Calu3 (cell line): ENCODE measurements at regions of chr11 and their contacts with region 1.

Region 1: GRCh38 chr11:75204685-75205563 is 35.6 kb upstream of the TPBGL start:
- DNase-seq: peak; percentile 92
- H3K4me3 Mint-ChIP-seq: no peak overlapping the region
- H3K27ac Mint-ChIP-seq: no peak overlapping the region
- H3K4me1 Mint-ChIP-seq: no peaks in the 10 kb centered on the region
- H3K27me3 Mint-ChIP-seq: peaks cover 31% of the 10 kb centered on the region
- CTCF ChIP-seq: peak; percentile 88

Region 2: GRCh38 chr11:73597956-73598718 is 1606.8 kb before region 1 on chr11 and contains the start of gene FAM168A:
- CTCF ChIA-PET with region 1: interaction called, 10 read pairs
- intact Hi-C with region 1: no loop called
- DNase-seq: peak; percentile 92
- H3K4me3 Mint-ChIP-seq: peak within 1 kb of the TSS; percentile 93
- H3K27ac Mint-ChIP-seq: peak within 1 kb of the TSS; percentile 83
- H3K4me1 Mint-ChIP-seq: peaks cover 22% of the 10 kb centered on the region
- H3K27me3 Mint-ChIP-seq: no peaks in the 10 kb centered on the region
- CTCF ChIP-seq: no peak
- total RNA-seq, gene FAM168A: 30.4 and 30.8 TPM in 2 replicates

Region 3: GRCh38 chr11:74366576-74366975 is 838.3 kb before region 1 on chr11:
- CTCF ChIA-PET with region 1: no interaction called
- intact Hi-C with region 1: no loop called
- DNase-seq: no peak
- H3K4me3 Mint-ChIP-seq: no peak overlapping the region
- H3K27ac Mint-ChIP-seq: no peak overlapping the region
- H3K4me1 Mint-ChIP-seq: no peaks in the 10 kb centered on the region
- H3K27me3 Mint-ChIP-seq: no peaks in the 10 kb centered on the region
- CTCF ChIP-seq: no peak

Region 4: GRCh38 chr11:74929431-74930363 is 275.2 kb before region 1 on chr11:
- CTCF ChIA-PET with region 1: interaction called, 10 read pairs
- intact Hi-C with region 1: loop called (anchors 2 kb)
- DNase-seq: peak; percentile 68
- H3K4me3 Mint-ChIP-seq: no peak overlapping the region
- H3K27ac Mint-ChIP-seq: no peak overlapping the region
- H3K4me1 Mint-ChIP-seq: no peaks in the 10 kb centered on the region
- H3K27me3 Mint-ChIP-seq: no peaks in the 10 kb centered on the region
- CTCF ChIP-seq: peak; percentile 63

Region 5: DNA sequence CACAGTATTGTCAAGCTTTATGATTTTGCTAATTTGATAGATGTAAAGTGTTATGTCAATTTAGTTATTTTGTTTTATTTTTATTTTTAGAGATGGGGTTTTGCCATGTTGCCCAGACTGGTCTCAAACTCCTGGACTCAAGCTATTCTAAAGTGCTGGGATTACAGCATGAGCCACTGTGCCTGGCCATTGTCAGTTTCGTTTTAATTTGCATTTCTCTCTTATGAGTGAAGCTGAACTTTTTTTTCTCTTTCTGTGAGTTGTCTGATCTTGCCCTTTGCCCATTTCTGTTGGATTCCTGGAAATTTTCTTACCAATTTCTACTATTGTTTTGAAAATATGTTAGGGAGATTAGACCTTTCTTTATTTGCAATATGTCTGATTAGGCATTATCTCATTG is 200.7 kb before region 1 on chr11:
- CTCF ChIA-PET with region 1: no interaction called
- intact Hi-C with region 1: no loop called
- DNase-seq: no peak
- H3K4me3 Mint-ChIP-seq: no peak overlapping the region
- H3K27ac Mint-ChIP-seq: no peak overlapping the region
- H3K4me1 Mint-ChIP-seq: no peaks in the 10 kb centered on the region
- H3K27me3 Mint-ChIP-seq: no peaks in the 10 kb centered on the region
- CTCF ChIP-seq: no peak

Region 6: DNA sequence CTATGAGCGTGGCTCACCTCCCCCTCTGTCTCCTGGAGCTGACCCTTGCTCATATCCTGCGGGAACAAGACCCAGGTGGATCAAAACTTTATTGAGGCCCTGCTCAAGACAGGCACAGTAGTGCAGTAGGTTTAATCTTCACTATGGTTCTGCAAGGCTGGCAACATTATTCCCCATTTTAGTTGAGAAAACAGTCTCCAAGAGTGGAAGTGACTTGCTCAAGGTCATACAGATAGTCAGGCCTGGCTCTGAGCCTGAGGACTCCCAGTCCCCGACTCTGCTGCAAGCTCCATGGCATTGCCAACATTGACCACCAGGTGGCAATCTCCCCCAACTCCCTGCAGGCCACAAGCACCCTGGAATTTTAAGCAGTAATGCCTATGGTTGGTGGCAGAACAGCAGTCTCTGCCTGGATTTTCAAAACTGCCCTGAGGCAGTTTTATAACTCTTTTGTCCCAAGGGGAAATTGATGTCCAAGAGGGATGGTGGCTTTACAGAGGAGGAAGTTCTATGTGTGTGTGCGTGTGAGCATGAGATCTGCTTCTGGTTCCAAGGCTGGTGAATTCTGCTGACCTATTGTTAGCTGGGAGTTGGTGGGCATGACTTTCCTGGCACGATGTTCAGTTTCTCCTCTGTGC is 182.0 kb before region 1 on chr11:
- CTCF ChIA-PET with region 1: interaction called, 89 read pairs
- intact Hi-C with region 1: loop called (anchors 1 kb)
- DNase-seq: peak; percentile 88
- H3K4me3 Mint-ChIP-seq: no peak overlapping the region
- H3K27ac Mint-ChIP-seq: no peak overlapping the region
- H3K4me1 Mint-ChIP-seq: peaks cover 8% of the 10 kb centered on the region
- H3K27me3 Mint-ChIP-seq: no peaks in the 10 kb centered on the region
- CTCF ChIP-seq: peak; percentile 97

Region 7: DNA sequence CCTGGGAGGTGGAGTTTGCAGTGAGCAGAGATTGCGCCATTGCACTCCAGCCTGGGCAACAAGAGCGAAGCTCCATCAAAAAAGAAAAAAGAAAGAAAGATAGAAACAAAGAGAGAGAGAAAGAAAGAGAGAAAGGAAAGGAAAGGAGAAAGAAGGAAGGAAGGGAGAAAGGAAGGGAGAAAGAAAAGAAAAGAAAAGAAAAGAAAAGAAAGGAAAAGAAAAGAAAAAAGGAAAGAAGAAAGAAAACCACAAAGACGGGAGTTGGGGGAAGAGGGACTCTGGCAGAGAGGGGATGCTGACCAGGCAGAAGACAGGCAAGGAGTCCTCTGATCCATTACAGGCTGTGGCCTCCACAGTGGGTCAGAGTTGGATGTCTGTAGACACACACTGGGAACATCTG is 72.8 kb before region 1 on chr11:
- CTCF ChIA-PET with region 1: no interaction called
- intact Hi-C with region 1: no loop called
- DNase-seq: no peak
- H3K4me3 Mint-ChIP-seq: no peak overlapping the region
- H3K27ac Mint-ChIP-seq: no peak overlapping the region
- H3K4me1 Mint-ChIP-seq: no peaks in the 10 kb centered on the region
- H3K27me3 Mint-ChIP-seq: peaks cover 62% of the 10 kb centered on the region
- CTCF ChIP-seq: no peak

Region 8: GRCh38 chr11:75142714-75143419 is 62.1 kb before region 1 on chr11:
- CTCF ChIA-PET with region 1: interaction called, 148 read pairs
- intact Hi-C with region 1: loop called (anchors 1 kb)
- DNase-seq: peak; percentile 54
- H3K4me3 Mint-ChIP-seq: no peak overlapping the region
- H3K27ac Mint-ChIP-seq: peak overlapping the region; percentile 24
- H3K4me1 Mint-ChIP-seq: peaks cover 13% of the 10 kb centered on the region
- H3K27me3 Mint-ChIP-seq: peaks cover 32% of the 10 kb centered on the region
- CTCF ChIP-seq: no peak

Region 9: DNA sequence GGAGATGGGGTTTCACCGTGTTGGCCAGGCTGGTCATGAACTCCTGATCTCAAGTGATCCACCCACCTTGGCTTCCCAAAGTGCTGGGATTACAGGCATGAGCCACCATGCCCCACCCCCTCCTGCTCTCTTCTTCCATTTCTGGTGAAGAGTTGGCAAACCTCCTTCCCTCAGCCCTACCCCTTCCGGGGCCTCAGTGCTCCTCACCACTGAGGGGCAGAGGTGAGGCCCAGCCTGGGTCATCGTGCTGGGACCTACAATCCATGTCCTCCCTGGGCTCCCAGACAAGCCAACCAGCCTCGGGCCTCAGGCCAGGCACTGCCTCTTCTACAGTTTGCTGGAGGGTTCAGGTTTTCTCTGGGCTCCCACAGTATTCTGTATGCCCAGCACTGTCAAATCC is 20.9 kb after region 1 on chr11:
- CTCF ChIA-PET with region 1: no interaction called
- intact Hi-C with region 1: no loop called
- DNase-seq: no peak
- H3K4me3 Mint-ChIP-seq: no peak overlapping the region
- H3K27ac Mint-ChIP-seq: no peak overlapping the region
- H3K4me1 Mint-ChIP-seq: no peaks in the 10 kb centered on the region
- H3K27me3 Mint-ChIP-seq: peaks cover 59% of the 10 kb centered on the region
- CTCF ChIP-seq: no peak

Region 10: DNA sequence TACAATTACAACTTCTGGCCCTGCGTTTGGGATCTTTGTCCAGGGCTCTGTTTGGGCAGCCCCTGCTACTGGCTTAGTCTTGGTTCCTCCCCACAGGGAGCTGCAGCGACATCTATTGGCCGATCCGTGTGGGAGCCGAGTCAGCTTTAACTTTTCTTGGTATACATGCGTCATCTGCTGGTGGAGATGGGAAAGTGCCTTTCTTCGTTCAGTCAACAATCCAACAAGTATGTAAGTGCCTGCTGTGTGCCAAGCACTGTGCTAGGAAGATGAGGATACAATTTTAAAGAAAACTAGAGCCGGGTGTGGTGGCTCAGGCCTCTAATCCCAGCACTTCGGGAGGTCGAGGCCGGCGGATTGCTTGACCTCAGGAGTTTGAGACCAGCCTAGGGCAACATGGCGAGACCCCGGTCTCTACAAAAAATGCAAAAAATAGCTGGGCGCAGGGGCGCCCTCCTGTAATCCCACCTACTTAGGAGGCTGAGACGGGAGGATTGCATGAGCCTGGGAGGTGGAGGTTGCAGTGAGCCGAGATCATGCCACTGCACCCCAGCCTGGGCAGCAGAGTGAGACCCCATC is 43.9 kb after region 1 on chr11:
- CTCF ChIA-PET with region 1: interaction called, 10 read pairs
- intact Hi-C with region 1: no loop called
- DNase-seq: peak; percentile 87
- H3K4me3 Mint-ChIP-seq: no peak overlapping the region
- H3K27ac Mint-ChIP-seq: no peak overlapping the region
- H3K4me1 Mint-ChIP-seq: no peaks in the 10 kb centered on the region
- H3K27me3 Mint-ChIP-seq: peaks cover 85% of the 10 kb centered on the region
- CTCF ChIP-seq: peak; percentile 97